Psoas muscle (tissue), 8 donors: ENCODE measurements at regions of chr9 and their contacts with region 1.

Region 1: GRCh38 chr9:136483589-136484152 is 831 bp upstream of the SEC16A start:
- DNase-seq: peak; percentile 93 to 97
- ATAC-seq: peak; percentile 65 to 78 (median 69)
- H3K4me3 ChIP-seq: peak overlapping the region; percentile 64
- H3K27ac ChIP-seq: peak overlapping the region; percentile 97
- H3K4me1 ChIP-seq: peaks cover 30% of the 10 kb centered on the region
- H3K27me3 ChIP-seq: no peaks in the 10 kb centered on the region
- CTCF ChIP-seq: no peak

Region 2: GRCh38 chr9:136467766-136468563 is 15.7 kb before region 1 on chr9:
- intact Hi-C with region 1: no loop called
- DNase-seq: no peak
- ATAC-seq: peak in 1 of 4 donors; percentile 50
- H3K4me3 ChIP-seq: no peak overlapping the region
- H3K27ac ChIP-seq: no peak overlapping the region
- H3K4me1 ChIP-seq: no peaks in the 10 kb centered on the region
- H3K27me3 ChIP-seq: no peaks in the 10 kb centered on the region
- CTCF ChIP-seq: no peak

Region 3: DNA sequence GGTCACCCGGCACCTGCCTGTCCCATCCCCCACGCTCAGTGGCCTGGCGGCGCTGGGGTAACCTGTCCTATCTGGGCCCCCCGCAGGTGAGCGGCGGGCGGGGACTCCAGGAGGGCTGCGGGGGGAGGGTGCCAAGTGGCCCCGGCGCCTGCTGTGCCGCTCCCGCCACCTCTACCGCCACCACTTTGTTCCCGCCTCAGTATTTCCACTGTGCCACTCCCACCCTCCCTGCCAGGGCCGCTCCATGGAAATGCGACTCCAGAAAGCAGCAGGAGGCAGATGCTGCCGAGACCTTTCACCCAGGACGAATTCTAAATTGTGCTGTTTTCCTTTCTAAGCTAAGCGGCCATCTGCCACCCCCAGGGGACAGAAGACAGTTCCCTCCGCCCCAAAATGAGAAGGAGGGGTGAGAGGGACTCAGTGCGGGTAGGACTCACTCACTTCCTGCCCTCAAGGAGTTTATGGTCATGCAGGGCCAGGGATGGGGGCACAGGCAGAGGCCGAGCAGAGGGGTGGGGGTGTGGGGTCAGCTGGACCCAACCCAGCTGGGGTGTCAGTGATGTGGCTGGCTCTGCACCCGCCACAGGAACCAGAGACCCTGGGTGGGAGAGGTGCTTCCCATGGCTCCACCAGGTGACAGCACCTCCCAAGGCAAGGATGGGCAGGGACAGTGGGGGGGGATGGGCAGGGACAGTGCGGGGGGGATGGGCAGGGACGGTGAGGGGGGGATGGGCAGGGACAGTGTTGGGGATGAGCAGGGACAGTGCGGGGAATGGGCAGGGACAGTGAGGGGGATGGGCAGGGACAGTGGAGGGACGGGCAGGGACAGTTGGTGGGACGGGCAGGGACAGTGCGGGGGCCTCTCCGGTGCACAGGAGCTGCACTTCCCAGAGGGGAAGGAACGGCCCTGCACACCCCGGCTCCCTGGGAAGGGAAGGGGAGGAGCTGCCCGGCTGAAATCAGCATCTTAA is 44.3 kb after region 1 on chr9:
- intact Hi-C with region 1: no loop called
- DNase-seq: no peak
- ATAC-seq: no peak
- H3K4me3 ChIP-seq: no peak overlapping the region
- H3K27ac ChIP-seq: peak overlapping the region; percentile 85
- H3K4me1 ChIP-seq: peaks cover 63% of the 10 kb centered on the region
- H3K27me3 ChIP-seq: peaks cover 0 to 3% (median 0%) of the 10 kb centered on the region in 3 donors
- CTCF ChIP-seq: no peak

Region 4: DNA sequence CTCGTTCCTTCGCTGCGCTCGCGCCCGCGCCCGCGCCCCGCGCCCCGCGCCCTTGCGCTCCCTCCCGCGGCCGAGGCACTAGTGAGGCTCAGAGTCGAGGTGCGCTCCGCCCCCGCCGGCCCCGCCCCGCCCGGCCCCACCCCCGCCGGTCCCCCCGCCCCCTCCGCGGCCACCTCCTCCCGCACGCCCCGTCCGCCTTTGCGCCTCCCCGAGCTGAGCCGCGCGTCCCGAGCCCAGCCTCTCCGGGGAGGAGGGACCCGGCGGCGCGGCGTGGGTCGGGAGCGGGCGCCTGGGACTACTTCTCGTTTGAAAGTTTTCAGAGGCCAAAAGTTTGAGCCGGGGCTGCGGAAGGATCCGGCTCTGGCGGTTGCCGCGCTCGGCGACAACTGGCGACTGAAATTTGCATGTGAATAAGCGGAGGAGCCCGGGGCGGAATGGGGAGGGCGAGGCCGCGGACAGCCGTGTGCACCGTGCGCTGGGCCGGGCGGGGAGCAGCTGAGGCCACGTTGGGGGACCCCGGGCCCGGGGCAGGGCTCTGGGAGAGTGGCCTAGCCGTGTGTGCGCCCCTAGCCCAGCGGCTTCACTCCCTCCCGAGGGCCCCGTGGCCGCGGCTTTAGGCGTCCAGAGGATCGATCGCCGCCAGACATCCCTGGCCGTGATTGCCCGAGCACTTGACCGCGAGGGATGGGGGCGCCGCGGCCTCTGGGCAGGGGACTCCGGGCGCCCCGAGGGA is 62.5 kb after region 1 on chr9 and contains the start of gene NOTCH1:
- intact Hi-C with region 1: loop called in 1 of 2 experiments (anchors 5 kb)
- DNase-seq: peak; percentile 92 to 95
- ATAC-seq: peak; percentile 76 to 83 (median 80)
- H3K4me3 ChIP-seq: peak within 1 kb of the TSS; percentile 78
- H3K27ac ChIP-seq: peak within 1 kb of the TSS; percentile 96
- H3K4me1 ChIP-seq: peaks cover 22% of the 10 kb centered on the region
- H3K27me3 ChIP-seq: no peaks in the 10 kb centered on the region
- CTCF ChIP-seq: peak; percentile 8
- total RNA-seq, gene NOTCH1: 8.7 to 15.4 (median 12.3) TPM

Region 5: DNA sequence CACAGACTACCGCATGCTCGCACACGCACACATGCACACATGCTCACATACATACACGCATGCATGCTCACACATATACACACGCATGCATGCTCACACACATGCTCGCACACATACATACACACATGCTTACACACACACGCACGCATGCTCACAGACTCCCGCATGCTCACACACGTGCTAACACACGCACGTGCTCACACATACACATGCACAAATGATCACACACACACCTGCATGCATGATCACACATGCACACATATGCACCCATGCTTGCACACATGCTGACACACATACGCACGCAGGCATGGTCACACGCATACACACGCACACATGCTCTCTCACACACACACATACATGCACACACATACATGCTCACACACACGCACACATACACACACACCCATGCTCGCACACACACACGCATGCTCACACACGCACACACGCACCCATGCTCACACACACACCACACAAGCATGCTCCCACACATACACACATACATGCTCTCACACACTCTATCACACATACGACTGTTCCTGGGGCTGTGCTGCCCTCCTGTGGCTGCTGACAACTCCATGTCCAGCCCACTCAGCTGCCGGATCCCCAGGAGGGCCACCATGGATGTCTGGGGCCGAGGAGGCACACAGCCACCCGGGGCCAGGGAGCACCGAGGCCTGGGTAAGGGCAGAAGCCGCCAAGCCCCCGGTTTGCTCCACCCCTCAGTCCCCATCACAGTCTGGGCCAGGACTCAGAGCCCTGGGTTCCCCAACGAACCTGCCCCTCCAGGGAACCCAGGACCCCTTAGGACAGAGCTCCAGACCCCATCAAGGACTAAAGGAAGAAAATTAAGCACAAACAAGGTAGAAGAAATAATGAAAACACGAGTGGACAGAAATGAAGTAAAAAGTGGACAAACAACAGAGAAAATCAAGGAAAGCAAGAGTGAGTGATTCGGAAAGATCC is 147.6 kb after region 1 on chr9:
- intact Hi-C with region 1: loop called (anchors 1 to 2 kb)
- DNase-seq: peak; percentile 83 to 88
- ATAC-seq: peak; percentile 83 to 95 (median 90)
- H3K4me3 ChIP-seq: no peak overlapping the region
- H3K27ac ChIP-seq: no peak overlapping the region
- H3K4me1 ChIP-seq: no peaks in the 10 kb centered on the region
- H3K27me3 ChIP-seq: peaks cover 0 to 2% (median 0%) of the 10 kb centered on the region in 3 donors
- CTCF ChIP-seq: peak; percentile 81

Region 6: GRCh38 chr9:136694236-136694942 is 210.7 kb after region 1 on chr9:
- intact Hi-C with region 1: loop called (anchors 2 to 5 kb)
- DNase-seq: peak; percentile 72 to 85
- ATAC-seq: peak; percentile 61 to 72 (median 64)
- H3K4me3 ChIP-seq: no peak overlapping the region
- H3K27ac ChIP-seq: peak overlapping the region; percentile 30
- H3K4me1 ChIP-seq: peaks cover 27% of the 10 kb centered on the region
- H3K27me3 ChIP-seq: peaks cover 0 to 14% (median 3%) of the 10 kb centered on the region in 3 donors
- CTCF ChIP-seq: peak; percentile 71